ENCODE measurements at regions of chr1 and their contacts with region 1.

Region 1: GRCh38 chr1:180482425-180483275 is 19.7 kb downstream of the ACBD6 start:
- DNase-seq: peak; percentile 33 to 64 (median 54)
- H3K4me3 ChIP-seq: peak overlapping the region in 1 of 3 experiments; percentile 15
- H3K4me3 Mint-ChIP-seq: peak overlapping the region in 1 of 2 donors; percentile 65
- H3K27ac ChIP-seq: no peak overlapping the region
- H3K27ac Mint-ChIP-seq: no peak overlapping the region
- H3K4me1 ChIP-seq: peaks cover 0 to 7% of the 10 kb centered on the region in 2 donors
- H3K4me1 Mint-ChIP-seq: peaks cover 11% of the 10 kb centered on the region
- H3K27me3 ChIP-seq: no peaks in the 10 kb centered on the region
- H3K27me3 Mint-ChIP-seq: peaks cover 0 to 2% (median 0%) of the 10 kb centered on the region in 3 donors
- CTCF ChIP-seq: peak; percentile 87

Region 2: GRCh38 chr1:180252638-180253536 is 229.8 kb before region 1 on chr1:
- intact Hi-C with region 1: loop called (anchors 2 to 5 kb)
- DNase-seq: peak; percentile 72 to 82 (median 76)
- H3K4me3 ChIP-seq: no peak overlapping the region
- H3K4me3 Mint-ChIP-seq: peak overlapping the region in 1 of 2 donors; percentile 46
- H3K27ac ChIP-seq: no peak overlapping the region
- H3K27ac Mint-ChIP-seq: peak overlapping the region in 4 of 7 donors; percentile 16 to 76 (median 36)
- H3K4me1 ChIP-seq: peaks cover 14 to 22% of the 10 kb centered on the region in 2 donors
- H3K4me1 Mint-ChIP-seq: peaks cover 14% of the 10 kb centered on the region
- H3K27me3 ChIP-seq: no peaks in the 10 kb centered on the region
- H3K27me3 Mint-ChIP-seq: peaks cover 9 to 15% (median 12%) of the 10 kb centered on the region in 3 donors
- CTCF ChIP-seq: peak; percentile 93